Pancreas (tissue), 10 donors: ENCODE measurements at regions of chr12 and their contacts with region 1.

Region 1: GRCh38 chr12:103877934-103878510 is 37.0 kb upstream of the NT5DC3 start:
- DNase-seq: peak in 3 of 6 donors; percentile 32 to 61 (median 35)
- ATAC-seq: peak; percentile 71 to 92 (median 89)
- H3K4me3 ChIP-seq: no peak overlapping the region
- H3K27ac ChIP-seq: no peak overlapping the region
- H3K4me1 ChIP-seq: no peaks in the 10 kb centered on the region
- H3K27me3 ChIP-seq: no peaks in the 10 kb centered on the region
- CTCF ChIP-seq: peak; percentile 43 to 58 (median 52)

Region 2: GRCh38 chr12:103779428-103780092 is 98.5 kb before region 1 on chr12:
- intact Hi-C with region 1: loop called in 1 of 3 experiments (anchors 5 kb)
- DNase-seq: no peak
- ATAC-seq: no peak
- H3K4me3 ChIP-seq: no peak overlapping the region
- H3K27ac ChIP-seq: no peak overlapping the region
- H3K4me1 ChIP-seq: peaks cover 0 to 8% (median 0%) of the 10 kb centered on the region in 3 donors
- H3K27me3 ChIP-seq: no peaks in the 10 kb centered on the region
- CTCF ChIP-seq: no peak